Left lung (tissue), 14 donors: ENCODE measurements at regions of chr4 and their contacts with region 1.

Region 1: DNA sequence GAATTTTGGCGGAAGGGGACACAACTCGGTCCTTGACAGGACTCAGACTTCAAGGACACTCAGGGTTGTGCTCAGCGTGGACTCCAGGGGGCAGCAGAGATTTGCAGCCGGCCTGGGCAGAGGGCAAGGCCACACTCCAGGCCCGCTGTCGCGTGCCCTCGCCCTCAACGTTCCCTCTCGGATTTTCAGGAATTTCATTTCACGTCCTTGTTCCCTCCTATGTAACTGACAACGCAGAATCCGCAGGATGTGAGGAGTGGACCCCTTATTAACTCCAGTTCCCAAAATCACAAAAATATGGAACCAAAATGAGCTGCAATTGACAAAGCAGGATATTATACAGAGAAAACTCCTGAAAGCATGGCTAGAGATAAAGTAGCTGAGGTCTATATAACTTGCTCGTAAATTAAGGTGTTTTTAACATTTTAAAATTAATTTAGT is 21.0 kb upstream of the DCTD start:
- DNase-seq: peak; percentile 55 to 91 (median 66)
- ATAC-seq: peak; percentile 100
- H3K4me3 ChIP-seq: no peak overlapping the region
- H3K27ac ChIP-seq: no peak overlapping the region
- H3K4me1 ChIP-seq: peaks cover 0 to 2% of the 10 kb centered on the region in 2 donors
- H3K27me3 ChIP-seq: no peaks in the 10 kb centered on the region
- CTCF ChIP-seq: peak; percentile 89 to 94

Region 2: GRCh38 chr4:183074296-183074990 is 136.2 kb after region 1 on chr4:
- intact Hi-C with region 1: loop called in 1 of 2 experiments (anchors 5 kb)
- DNase-seq: no peak
- ATAC-seq: peak; percentile 74
- H3K4me3 ChIP-seq: no peak overlapping the region
- H3K27ac ChIP-seq: peak overlapping the region in 1 of 2 donors; percentile 45
- H3K4me1 ChIP-seq: no peaks in the 10 kb centered on the region
- H3K27me3 ChIP-seq: no peaks in the 10 kb centered on the region
- CTCF ChIP-seq: no peak

Region 3: GRCh38 chr4:183342541-183343533 is 404.6 kb after region 1 on chr4:
- intact Hi-C with region 1: no loop called
- DNase-seq: peak in 1 of 4 donors; percentile 42
- ATAC-seq: peak; percentile 68
- H3K4me3 ChIP-seq: no peak overlapping the region
- H3K27ac ChIP-seq: no peak overlapping the region
- H3K4me1 ChIP-seq: peaks cover 0 to 5% of the 10 kb centered on the region in 2 donors
- H3K27me3 ChIP-seq: peaks cover 4 to 24% of the 10 kb centered on the region in 2 donors
- CTCF ChIP-seq: no peak